Calu3 (cell line): ENCODE measurements at regions of chr1 and their contacts with region 1.

Region 1: DNA sequence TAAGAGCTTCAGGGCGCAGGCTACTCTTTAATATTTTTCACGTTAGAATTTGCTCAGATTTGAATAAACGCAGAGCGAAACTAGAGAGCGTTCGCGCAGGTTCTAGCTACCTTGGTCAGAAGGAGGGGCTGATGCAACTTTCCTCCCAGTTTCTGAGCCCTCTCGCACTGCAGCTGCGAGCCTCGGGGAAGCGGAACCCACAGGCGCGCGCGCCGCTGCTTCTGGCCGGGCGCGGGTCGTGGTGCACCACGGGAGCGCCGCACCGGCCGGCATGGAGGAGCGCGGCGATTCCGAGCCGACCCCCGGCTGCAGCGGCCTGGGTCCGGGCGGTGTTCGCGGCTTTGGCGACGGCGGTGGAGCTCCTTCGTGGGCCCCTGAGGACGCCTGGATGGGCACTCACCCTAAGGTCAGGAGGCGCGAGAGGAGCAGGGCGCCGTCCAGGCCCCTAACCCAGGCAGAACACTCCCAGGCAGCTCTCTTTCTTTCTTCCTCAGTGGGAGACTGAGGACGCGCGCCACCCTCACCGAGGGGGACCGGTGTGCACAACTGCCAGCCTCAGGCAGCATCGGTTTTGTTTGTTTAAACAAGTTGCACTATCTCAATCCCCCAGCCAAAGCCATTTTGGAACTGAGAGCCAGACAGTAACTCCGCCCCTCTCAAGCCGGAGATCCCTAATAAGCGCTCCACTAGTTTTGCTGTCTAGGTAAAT is at the start of gene TSEN15:
- DNase-seq: peak; percentile 87
- H3K4me3 Mint-ChIP-seq: peak within 1 kb of the TSS; percentile 90
- H3K27ac Mint-ChIP-seq: peak within 1 kb of the TSS; percentile 100
- H3K4me1 Mint-ChIP-seq: peaks cover 35% of the 10 kb centered on the region
- H3K27me3 Mint-ChIP-seq: no peaks in the 10 kb centered on the region
- CTCF ChIP-seq: no peak
- total RNA-seq, gene TSEN15: 51.7 and 62.6 TPM in 2 replicates

Region 2: GRCh38 chr1:183633633-183634343 is 417.9 kb before region 1 on chr1:
- CTCF ChIA-PET with region 1: no interaction called
- intact Hi-C with region 1: loop called (anchors 5 kb)
- DNase-seq: peak; percentile 31
- H3K4me3 Mint-ChIP-seq: peak overlapping the region; percentile 95
- H3K27ac Mint-ChIP-seq: peak overlapping the region; percentile 50
- H3K4me1 Mint-ChIP-seq: peaks cover 31% of the 10 kb centered on the region
- H3K27me3 Mint-ChIP-seq: peaks cover 10% of the 10 kb centered on the region
- CTCF ChIP-seq: peak; percentile 54

Region 3: GRCh38 chr1:183956559-183957188 is 95.0 kb before region 1 on chr1:
- CTCF ChIA-PET with region 1: no interaction called
- intact Hi-C with region 1: loop called (anchors 2 kb)
- DNase-seq: peak; percentile 31
- H3K4me3 Mint-ChIP-seq: no peak overlapping the region
- H3K27ac Mint-ChIP-seq: no peak overlapping the region
- H3K4me1 Mint-ChIP-seq: peaks cover 9% of the 10 kb centered on the region
- H3K27me3 Mint-ChIP-seq: no peaks in the 10 kb centered on the region
- CTCF ChIP-seq: no peak

Region 4: DNA sequence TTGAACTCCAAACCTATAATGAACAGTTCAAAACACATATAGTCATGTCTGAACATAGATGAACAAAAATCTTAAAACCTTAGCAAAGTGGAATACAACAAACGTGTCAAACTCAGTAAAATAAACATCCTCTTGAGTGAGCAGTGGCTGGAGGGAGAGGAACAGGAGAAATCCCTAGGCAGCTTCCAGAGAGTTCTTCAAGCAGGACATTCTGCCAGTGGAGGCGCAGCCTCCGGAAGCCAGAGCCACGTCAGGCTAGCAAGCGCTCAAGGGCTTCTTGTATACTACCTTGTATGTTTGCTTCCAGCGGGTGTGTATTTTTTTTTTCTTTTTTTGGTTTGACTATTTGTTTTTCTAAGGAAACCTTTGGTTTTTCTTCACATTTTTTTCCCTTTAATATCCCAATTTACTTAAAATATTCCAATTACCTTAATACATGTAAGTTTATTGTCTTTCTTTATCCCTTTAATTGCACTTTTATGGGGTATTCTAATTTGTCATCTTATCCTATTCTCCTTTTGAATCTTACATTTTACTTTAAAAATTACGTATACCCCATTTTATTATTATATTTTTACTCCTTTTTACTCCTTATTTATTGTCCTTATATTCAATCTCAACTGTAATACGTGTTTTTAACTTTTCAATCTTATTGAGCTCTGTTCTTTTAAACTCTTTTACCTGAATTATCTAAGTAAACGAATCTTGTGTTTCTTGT is 56.2 kb before region 1 on chr1:
- CTCF ChIA-PET with region 1: interaction called, 3 read pairs
- intact Hi-C with region 1: loop called (anchors 5 kb)
- DNase-seq: no peak
- H3K4me3 Mint-ChIP-seq: no peak overlapping the region
- H3K27ac Mint-ChIP-seq: no peak overlapping the region
- H3K4me1 Mint-ChIP-seq: peaks cover 65% of the 10 kb centered on the region
- H3K27me3 Mint-ChIP-seq: no peaks in the 10 kb centered on the region
- CTCF ChIP-seq: no peak

Region 5: GRCh38 chr1:184101141-184101540 is 49.5 kb after region 1 on chr1:
- CTCF ChIA-PET with region 1: no interaction called
- intact Hi-C with region 1: no loop called
- DNase-seq: no peak
- H3K4me3 Mint-ChIP-seq: no peak overlapping the region
- H3K27ac Mint-ChIP-seq: no peak overlapping the region
- H3K4me1 Mint-ChIP-seq: no peaks in the 10 kb centered on the region
- H3K27me3 Mint-ChIP-seq: no peaks in the 10 kb centered on the region
- CTCF ChIP-seq: no peak